Panc1 (cell line): ENCODE measurements at regions of chr5 and their contacts with region 1.

Region 1: GRCh38 chr5:141313711-141314110 is 6.9 kb downstream of the TAF7 start:
- DNase-seq: no peak
- ATAC-seq: no peak
- H3K4me3 ChIP-seq: no peak overlapping the region
- H3K27ac ChIP-seq: no peak overlapping the region
- H3K4me1 ChIP-seq: no peaks in the 10 kb centered on the region
- H3K27me3 ChIP-seq: no peaks in the 10 kb centered on the region
- CTCF ChIP-seq: no peak

Region 2: DNA sequence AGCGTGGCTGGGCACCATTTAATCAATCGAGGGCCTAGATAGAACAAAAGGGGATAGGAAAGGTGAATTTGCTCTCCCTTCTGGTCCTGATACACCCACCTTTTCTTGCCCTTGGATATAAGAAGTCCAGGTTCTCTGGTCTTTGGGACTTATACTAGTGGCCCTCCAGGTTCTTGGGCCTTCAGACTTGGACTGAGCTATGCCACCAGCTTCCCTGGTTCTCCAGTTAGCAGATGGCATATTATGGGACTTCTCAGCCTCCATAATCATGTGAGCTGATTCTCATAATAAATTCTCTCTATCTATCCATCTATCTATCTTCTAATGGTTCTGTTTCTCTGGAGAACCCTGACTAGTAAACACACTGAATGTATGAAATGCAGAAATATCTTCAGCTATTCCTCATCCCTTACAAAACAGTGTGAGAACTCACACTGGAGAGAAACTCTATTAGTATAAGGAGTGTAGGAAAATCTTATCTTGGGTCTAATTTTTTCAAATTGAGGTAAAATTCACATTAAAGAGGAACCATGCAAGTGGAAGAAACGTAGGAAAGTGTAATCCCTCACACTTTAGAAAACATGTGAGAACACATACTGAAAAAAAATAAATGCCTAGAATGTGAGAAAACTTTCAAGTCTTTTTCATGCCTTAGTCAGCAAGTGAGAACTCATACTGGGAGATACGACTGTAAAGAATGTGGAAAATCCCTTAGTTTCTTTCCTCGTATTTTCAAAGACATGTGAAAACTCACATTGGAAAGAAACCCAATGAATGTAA is 53.1 kb before region 1 on chr5:
- CTCF ChIA-PET with region 1: no interaction called
- POLR2A ChIA-PET with region 1: no interaction called
- in situ Hi-C with region 1: no loop called
- intact Hi-C with region 1: loop called (anchors 10 kb)
- DNase-seq: no peak
- ATAC-seq: no peak
- H3K4me3 ChIP-seq: no peak overlapping the region
- H3K27ac ChIP-seq: no peak overlapping the region
- H3K4me1 ChIP-seq: no peaks in the 10 kb centered on the region
- H3K27me3 ChIP-seq: no peaks in the 10 kb centered on the region
- CTCF ChIP-seq: no peak

Region 3: DNA sequence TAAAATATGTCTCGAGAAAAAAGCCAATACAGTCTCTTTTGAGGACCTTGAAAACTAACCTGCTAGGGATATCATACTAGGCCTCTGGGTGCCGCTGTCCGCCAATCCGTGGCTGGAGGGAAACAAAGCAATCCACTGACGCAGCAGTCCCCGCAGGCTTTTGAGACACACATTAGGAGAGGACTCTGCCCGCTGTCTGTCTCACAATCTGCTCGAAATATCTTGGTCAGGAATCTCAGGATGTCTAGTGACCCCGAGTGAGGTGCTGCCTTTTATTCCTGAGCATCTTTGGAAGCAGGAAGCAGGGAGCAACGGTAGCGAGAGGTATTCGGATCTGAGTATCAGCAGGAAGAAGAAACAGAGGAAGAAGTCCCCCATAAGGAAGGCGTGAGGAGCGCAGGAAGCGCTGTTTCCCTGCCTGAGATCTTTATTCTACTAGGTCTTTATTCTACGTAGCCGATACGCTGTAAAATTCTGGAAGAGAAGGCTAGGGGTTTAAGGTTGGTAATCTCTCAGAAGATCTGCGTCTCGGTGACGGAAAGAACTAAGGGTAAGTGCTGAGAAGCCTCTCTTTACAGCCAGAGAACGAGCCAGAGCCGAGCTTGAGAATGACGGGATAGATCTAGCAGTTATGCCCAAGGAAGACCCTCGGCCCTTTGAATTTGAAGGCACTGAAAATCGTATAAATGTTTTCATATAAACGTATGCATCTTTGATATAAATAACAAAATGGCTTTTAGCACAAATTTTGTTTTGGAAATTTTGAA is 12.6 kb after region 1 on chr5:
- CTCF ChIA-PET with region 1: no interaction called
- POLR2A ChIA-PET with region 1: no interaction called
- in situ Hi-C with region 1: no loop called
- intact Hi-C with region 1: no loop called
- DNase-seq: no peak
- ATAC-seq: peak; percentile 94
- H3K4me3 ChIP-seq: peak overlapping the region; percentile 50 to 77
- H3K27ac ChIP-seq: peak overlapping the region; percentile 73
- H3K4me1 ChIP-seq: no peaks in the 10 kb centered on the region
- H3K27me3 ChIP-seq: no peaks in the 10 kb centered on the region
- CTCF ChIP-seq: peak; percentile 82

Region 4: GRCh38 chr5:141478321-141478945 is 164.7 kb after region 1 on chr5:
- CTCF ChIA-PET with region 1: no interaction called
- POLR2A ChIA-PET with region 1: no interaction called
- in situ Hi-C with region 1: no loop called
- intact Hi-C with region 1: no loop called
- DNase-seq: no peak
- ATAC-seq: no peak
- H3K4me3 ChIP-seq: peak overlapping the region in 1 of 2 experiments; percentile 8; a peak in 1 of 4 replicates
- H3K27ac ChIP-seq: no peak overlapping the region
- H3K4me1 ChIP-seq: peaks cover 12% of the 10 kb centered on the region
- H3K27me3 ChIP-seq: no peaks in the 10 kb centered on the region
- CTCF ChIP-seq: no peak